A549 (cell line): ENCODE measurements at regions of chr7 and their contacts with region 1.

Region 1: DNA sequence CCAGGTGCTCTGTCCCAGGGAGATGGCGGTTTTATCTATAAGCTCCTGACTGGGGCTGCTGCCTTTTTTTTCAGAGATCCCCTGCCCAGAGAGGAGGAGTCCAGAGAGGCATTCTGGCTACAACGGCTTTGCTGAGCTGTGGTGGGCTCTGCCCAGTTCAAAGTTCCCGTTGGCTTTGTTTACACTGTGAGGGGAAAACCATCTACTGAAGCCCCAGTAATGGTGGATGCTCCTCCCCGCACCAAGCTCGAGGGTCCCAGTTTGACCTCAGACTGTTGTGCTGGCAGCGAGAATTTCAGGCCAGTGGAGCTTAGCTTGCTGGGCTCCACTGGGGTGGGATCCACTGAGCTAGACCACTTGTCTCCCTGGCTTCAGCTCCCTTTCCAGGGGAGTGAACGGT is 16.4 kb upstream of the SLC26A5 start:
- DNase-seq: no peak
- ATAC-seq: no peak
- H3K4me3 ChIP-seq: no peak overlapping the region
- H3K27ac ChIP-seq: no peak overlapping the region
- H3K4me1 ChIP-seq: no peaks in the 10 kb centered on the region
- CTCF ChIP-seq: no peak
- EP300 ChIP-seq: no peak
- POLR2A ChIP-seq: no peak
- RAD21 ChIP-seq: no peak

Region 2: GRCh38 chr7:103392018-103392417 is 70.3 kb before region 1 on chr7:
- CTCF ChIA-PET with region 1: no interaction called
- POLR2A ChIA-PET with region 1: no interaction called
- DNase-seq: no peak
- ATAC-seq: no peak
- H3K4me3 ChIP-seq: no peak overlapping the region
- H3K27ac ChIP-seq: no peak overlapping the region
- H3K4me1 ChIP-seq: no peaks in the 10 kb centered on the region
- CTCF ChIP-seq: no peak
- EP300 ChIP-seq: no peak
- POLR2A ChIP-seq: no peak
- RAD21 ChIP-seq: no peak

Region 3: DNA sequence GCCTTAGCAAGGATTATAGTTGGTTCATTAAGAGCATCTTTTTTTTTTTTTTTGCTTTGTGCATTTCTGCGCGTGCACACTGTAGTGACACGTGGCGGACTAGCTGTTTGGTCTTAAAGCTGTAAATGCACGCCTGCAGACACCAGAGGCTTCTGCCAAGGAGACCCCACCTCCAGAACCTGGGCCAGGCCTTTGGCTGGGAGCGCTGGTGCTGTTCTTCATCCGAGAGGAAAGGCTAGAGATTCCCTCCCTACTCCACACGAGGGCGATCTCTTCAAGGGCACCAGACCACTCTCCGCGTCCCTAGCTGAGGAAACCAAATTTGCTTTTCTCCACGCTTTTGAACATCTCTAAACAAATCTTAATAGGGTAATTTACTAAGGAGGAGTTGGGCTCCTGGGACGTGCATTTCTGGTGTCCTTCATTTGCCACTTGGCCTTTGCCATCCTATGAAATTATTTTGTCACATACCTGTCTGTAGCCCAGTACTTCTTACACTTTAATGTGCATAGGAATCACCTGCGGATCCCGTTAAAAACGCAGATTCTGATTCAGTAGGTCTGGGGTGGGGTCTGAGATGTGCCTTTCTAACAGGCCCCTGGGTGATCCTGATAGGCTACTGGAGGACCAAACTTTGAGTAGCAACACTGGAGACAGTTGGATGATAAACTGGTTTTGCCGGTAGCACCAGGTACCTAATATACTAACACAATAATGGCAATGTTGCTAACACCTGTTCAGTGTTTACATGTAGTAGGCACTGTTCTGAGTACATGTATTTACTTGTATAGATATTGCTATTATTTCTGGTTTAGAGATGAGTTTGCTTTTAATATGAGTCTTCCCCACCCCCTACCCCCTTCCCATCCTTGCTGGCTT is 15.0 kb before region 1 on chr7:
- CTCF ChIA-PET with region 1: interaction called, 10 read pairs
- POLR2A ChIA-PET with region 1: no interaction called
- DNase-seq: peak; percentile 59 to 65
- ATAC-seq: peak; percentile 93 to 99
- H3K4me3 ChIP-seq: no peak overlapping the region
- H3K27ac ChIP-seq: no peak overlapping the region
- H3K4me1 ChIP-seq: peaks cover 7% of the 10 kb centered on the region; the same call in 1 of the 3 replicates
- CTCF ChIP-seq: peak; percentile 69
- EP300 ChIP-seq: no peak
- POLR2A ChIP-seq: no peak
- RAD21 ChIP-seq: peak; percentile 70 to 76

Region 4: DNA sequence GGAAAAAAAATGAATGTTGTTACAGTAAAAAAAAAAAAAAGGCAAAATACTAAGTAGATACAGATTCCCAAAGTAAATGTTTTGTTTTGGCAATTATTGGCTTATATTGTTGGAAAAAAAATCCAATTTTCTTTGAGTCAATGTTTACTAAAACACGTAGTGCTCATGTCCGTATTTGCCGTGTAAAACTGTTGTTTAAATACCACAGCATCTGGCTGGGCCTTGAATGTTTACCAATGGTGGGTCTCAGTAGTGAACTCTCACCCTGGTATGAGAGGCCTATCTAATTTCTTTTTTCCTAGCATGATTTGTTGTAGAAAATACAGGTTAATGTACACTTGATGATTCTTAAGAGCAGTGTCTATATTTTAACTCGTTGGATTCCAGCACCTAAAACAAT is 25.1 kb after region 1 on chr7:
- CTCF ChIA-PET with region 1: no interaction called
- POLR2A ChIA-PET with region 1: no interaction called
- DNase-seq: peak in 1 of 2 experiments; percentile 35
- ATAC-seq: peak in 1 of 2 experiments; percentile 45; a peak in 2 of 6 replicates
- H3K4me3 ChIP-seq: no peak overlapping the region
- H3K27ac ChIP-seq: no peak overlapping the region
- H3K4me1 ChIP-seq: no peaks in the 10 kb centered on the region
- CTCF ChIP-seq: no peak
- EP300 ChIP-seq: no peak
- POLR2A ChIP-seq: no peak
- RAD21 ChIP-seq: no peak

Region 5: DNA sequence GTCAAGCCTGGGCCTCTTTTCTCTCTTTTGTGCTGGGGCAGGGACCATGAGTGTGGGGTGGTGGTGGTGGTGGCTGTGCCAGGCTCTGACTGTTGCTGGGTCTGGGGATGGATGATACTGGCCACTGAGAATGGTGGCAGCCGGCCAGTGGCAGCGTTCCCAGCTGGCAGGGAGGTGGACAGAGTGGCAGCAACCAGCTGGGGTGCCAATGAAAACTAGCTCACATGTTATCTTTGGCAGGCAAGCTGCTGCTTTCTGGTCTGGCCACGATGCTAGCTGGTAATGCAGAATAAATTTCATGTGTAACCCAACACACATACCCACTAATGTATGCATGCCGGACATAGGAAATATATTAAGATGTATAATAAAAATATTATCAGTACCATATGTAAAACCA is 78.7 kb after region 1 on chr7:
- CTCF ChIA-PET with region 1: no interaction called
- POLR2A ChIA-PET with region 1: no interaction called
- DNase-seq: no peak
- ATAC-seq: peak in 1 of 2 experiments; percentile 39; a peak in 1 of 6 replicates
- H3K4me3 ChIP-seq: no peak overlapping the region
- H3K27ac ChIP-seq: no peak overlapping the region
- H3K4me1 ChIP-seq: no peaks in the 10 kb centered on the region
- CTCF ChIP-seq: no peak
- EP300 ChIP-seq: no peak
- POLR2A ChIP-seq: no peak
- RAD21 ChIP-seq: no peak

Region 6: DNA sequence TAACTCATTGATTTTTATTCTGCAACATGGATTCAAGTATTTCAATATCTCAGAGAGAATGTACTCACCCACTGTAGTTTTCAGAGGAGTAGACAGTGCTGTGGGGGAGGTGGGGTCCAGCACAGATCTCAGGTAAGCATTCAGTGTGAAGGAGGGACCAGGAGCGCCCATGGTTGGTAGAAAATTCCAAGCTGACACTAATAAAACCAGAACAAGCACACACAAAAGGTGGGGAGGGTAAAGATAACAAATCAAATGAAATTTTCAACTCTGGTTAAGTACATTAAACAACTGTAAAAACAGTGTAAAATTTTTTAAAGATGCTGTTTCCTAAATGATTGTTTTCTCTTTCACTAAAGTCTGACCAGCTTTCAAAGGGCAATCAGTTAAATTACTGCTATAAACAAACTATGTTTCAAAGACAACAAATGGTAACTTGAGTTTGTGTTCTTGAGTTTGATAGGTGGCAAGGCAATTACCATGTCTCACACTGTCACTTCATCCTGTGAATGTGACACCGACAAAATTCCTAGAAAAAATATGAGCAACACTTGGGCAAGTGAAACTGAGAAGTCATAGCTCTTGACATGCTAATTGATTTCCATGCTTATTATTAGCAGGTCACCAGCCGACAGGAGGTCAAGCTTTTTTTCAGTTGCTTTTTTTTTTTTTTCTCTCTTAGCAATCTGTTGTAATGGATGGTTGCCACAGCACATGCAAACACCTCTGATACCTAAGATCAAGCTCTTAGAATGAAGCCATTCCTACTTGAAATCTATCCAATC is 189.4 kb after region 1 on chr7:
- CTCF ChIA-PET with region 1: no interaction called
- POLR2A ChIA-PET with region 1: no interaction called
- DNase-seq: no peak
- ATAC-seq: no peak
- H3K4me3 ChIP-seq: no peak overlapping the region
- H3K27ac ChIP-seq: no peak overlapping the region
- H3K4me1 ChIP-seq: no peaks in the 10 kb centered on the region
- CTCF ChIP-seq: no peak
- EP300 ChIP-seq: no peak
- POLR2A ChIP-seq: no peak
- RAD21 ChIP-seq: no peak